Activated T-helper 1 cell treated with anti-CD3 and anti-CD28 coated beads, Interleukin-12 subunit alpha, Interleukin-12 subunit beta, Interleukin-2, Interleukin-4 antibody, amounts not matched to agents 30 ng/mL and 10 ng/mL and 1 ng/mL, durations not matched to agents 14 hours and 24 hours and 36 hours (primary cell): ENCODE measurements at regions of chrX and their contacts with region 1.

Region 1: GRCh38 chrX:153900831-153901752 is 3.4 kb upstream of the AVPR2 start:
- DNase-seq: peak; percentile 58
- H3K4me3 Mint-ChIP-seq: peak overlapping the region; percentile 51
- H3K27ac Mint-ChIP-seq: peak overlapping the region; percentile 58
- H3K4me1 Mint-ChIP-seq: peaks cover 29% of the 10 kb centered on the region
- H3K27me3 Mint-ChIP-seq: no peaks in the 10 kb centered on the region

Region 2: GRCh38 chrX:153703036-153703370 is 198.1 kb before region 1 on chrX:
- intact Hi-C with region 1: no loop called
- DNase-seq: no peak
- H3K4me3 Mint-ChIP-seq: no peak overlapping the region
- H3K27ac Mint-ChIP-seq: no peak overlapping the region
- H3K4me1 Mint-ChIP-seq: no peaks in the 10 kb centered on the region
- H3K27me3 Mint-ChIP-seq: no peaks in the 10 kb centered on the region

Region 3: DNA sequence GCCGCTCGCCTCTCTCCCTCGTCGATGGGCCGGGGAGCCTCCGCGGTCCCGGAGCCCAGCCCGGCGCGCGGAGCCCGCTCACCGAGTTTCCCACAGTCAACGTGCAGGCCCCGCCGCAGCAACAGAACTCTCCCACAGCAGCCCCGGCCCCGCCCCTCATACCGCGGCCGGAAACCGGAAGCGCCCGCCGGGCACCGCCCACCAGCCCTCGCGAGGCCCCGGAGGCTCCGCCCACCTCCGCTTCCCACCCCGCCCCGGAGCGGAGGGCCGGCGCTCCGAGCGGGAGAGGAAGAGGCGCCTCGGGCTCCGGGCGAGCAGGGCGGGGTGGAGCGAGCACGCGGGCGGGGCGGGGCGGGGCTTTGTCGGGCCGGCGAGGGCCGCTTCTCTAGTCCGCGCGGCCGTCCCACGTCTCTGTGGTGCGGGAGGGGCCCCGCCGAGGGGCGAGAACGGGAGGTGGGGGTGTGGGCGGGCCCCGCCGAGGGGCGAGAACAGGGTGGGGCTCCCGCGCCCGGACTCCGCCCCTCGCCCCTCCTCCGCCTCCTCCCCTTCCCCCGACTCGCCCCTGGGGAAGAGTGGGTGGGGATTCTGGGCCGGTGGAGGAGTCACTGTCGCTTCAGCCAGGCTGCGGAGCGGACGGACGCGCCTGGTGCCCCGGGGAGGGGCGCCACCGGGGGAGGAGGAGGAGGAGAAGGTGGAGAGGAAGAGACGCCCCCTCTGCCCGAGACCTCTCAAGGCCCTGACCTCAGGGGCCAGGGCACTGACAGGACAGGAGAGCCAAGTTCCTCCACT is 176.6 kb before region 1 on chrX and contains the starts of genes ABCD1 and BCAP31:
- intact Hi-C with region 1: no loop called
- DNase-seq: peak; percentile 86
- H3K4me3 Mint-ChIP-seq: peak within 1 kb of the TSS; percentile 92
- H3K27ac Mint-ChIP-seq: peak within 1 kb of the TSS; percentile 85
- H3K4me1 Mint-ChIP-seq: peaks cover 17% of the 10 kb centered on the region
- H3K27me3 Mint-ChIP-seq: no peaks in the 10 kb centered on the region
- total RNA-seq, gene ABCD1: 8.4 TPM in 2 replicates
- total RNA-seq, gene BCAP31: 156 and 166 TPM in 2 replicates

Region 4: GRCh38 chrX:153828723-153829548 is 72.2 kb before region 1 on chrX:
- intact Hi-C with region 1: loop called (anchors 5 kb)
- DNase-seq: no peak
- H3K4me3 Mint-ChIP-seq: no peak overlapping the region
- H3K27ac Mint-ChIP-seq: no peak overlapping the region
- H3K4me1 Mint-ChIP-seq: no peaks in the 10 kb centered on the region
- H3K27me3 Mint-ChIP-seq: peaks cover 32% of the 10 kb centered on the region

Region 5: GRCh38 chrX:153947009-153947769 is 46.1 kb after region 1 on chrX:
- intact Hi-C with region 1: loop called (anchors 1 kb)
- DNase-seq: peak; percentile 67
- H3K4me3 Mint-ChIP-seq: peak overlapping the region; percentile 3
- H3K27ac Mint-ChIP-seq: peak overlapping the region; percentile 91
- H3K4me1 Mint-ChIP-seq: peaks cover 9% of the 10 kb centered on the region
- H3K27me3 Mint-ChIP-seq: no peaks in the 10 kb centered on the region